HepG2 (cell line): ENCODE measurements at regions of chr6 and their contacts with region 1.

Region 1: GRCh38 chr6:11224252-11224965 is 8.1 kb downstream of the NEDD9 start:
- DNase-seq: no peak
- ATAC-seq: no peak
- H3K4me3 ChIP-seq: peak overlapping the region; percentile 6 to 49 (median 25); a peak in 5 of 6 replicates
- H3K27ac ChIP-seq: peak overlapping the region; percentile 31
- H3K4me1 ChIP-seq: peaks cover 91% of the 10 kb centered on the region
- H3K27me3 ChIP-seq: no peaks in the 10 kb centered on the region; a peak in 1 of 5 replicates
- CTCF ChIP-seq: no peak
- EP300 ChIP-seq: no peak
- POLR2A ChIP-seq: peak; percentile 7 to 37; a peak in 3 of 4 replicates
- RAD21 ChIP-seq: no peak

Region 2: DNA sequence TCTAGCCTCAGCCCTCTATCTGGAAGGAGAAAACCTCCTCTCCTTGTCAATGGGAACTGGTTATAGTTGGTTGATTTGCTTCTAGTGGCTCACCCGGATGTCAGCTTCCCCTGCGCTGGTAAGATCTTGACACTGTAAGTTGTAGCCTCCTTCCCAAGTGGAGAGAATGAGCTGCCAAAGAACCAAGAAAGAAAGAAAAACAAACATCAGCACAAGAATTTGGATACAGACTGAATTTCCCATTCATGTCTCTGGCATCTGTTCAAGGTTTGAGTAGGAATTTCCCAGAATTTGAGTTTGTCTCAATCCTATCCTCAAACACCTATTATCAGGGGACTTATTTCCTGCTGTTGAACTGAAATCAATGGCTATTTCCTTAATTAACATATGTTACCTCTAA is 224.4 kb before region 1 on chr6:
- CTCF ChIA-PET with region 1: no interaction called
- POLR2A ChIA-PET with region 1: no interaction called
- in situ Hi-C with region 1: no loop called
- intact Hi-C with region 1: no loop called
- DNase-seq: no peak
- ATAC-seq: no peak
- H3K4me3 ChIP-seq: no peak overlapping the region
- H3K27ac ChIP-seq: no peak overlapping the region
- H3K4me1 ChIP-seq: peaks cover 26% of the 10 kb centered on the region
- H3K27me3 ChIP-seq: no peaks in the 10 kb centered on the region
- CTCF ChIP-seq: no peak
- EP300 ChIP-seq: no peak
- POLR2A ChIP-seq: no peak
- RAD21 ChIP-seq: no peak

Region 3: DNA sequence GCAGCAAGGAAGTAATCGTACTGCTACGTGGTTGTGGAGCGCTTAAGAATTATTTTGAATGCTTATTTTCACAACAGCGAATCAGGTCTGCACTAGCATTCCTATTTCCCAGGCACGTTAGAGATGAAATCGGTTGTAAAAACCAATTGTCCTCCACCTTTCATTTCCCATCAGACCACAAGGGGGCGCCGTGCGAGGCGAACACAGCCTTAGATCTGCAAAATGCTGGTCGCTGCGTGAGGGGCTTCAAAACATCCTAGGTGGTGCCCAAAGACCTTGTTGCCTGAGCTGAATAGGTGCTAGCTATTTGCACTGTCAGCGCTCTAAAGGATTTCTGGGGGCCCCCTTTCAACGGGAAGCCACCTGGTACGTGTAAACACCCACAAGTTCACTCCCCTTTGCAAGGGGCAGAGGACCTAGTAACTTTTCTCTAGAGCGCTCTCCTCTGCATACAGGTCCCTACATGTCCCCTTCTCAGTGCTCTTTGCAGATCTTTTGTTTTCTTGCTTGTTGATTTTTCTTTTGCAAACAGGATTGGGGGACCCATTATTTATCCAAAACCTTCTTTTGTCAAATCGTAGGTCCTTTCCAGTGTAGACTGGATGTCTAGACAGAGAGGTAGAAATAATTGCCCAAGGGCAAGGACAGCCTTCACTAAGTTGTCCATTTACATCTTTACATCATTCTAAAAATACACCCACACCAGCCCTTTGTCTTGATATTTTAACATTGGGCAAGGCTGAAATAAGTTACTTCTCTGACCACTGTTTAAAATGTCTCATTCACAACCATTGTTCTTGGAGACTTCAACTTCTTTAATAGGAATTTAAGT is 51.7 kb before region 1 on chr6:
- CTCF ChIA-PET with region 1: no interaction called
- POLR2A ChIA-PET with region 1: no interaction called
- in situ Hi-C with region 1: no loop called
- intact Hi-C with region 1: loop called (anchors 2 kb)
- DNase-seq: peak; percentile 66
- ATAC-seq: peak; percentile 86
- H3K4me3 ChIP-seq: peak overlapping the region in 1 of 3 experiments; percentile 47; a peak in 2 of 6 replicates
- H3K27ac ChIP-seq: no peak overlapping the region
- H3K4me1 ChIP-seq: peaks cover 36% of the 10 kb centered on the region
- H3K27me3 ChIP-seq: no peaks in the 10 kb centered on the region
- CTCF ChIP-seq: peak; percentile 96
- EP300 ChIP-seq: no peak
- POLR2A ChIP-seq: no peak
- RAD21 ChIP-seq: peak; percentile 83

Region 4: GRCh38 chr6:11381801-11382513 is 157.5 kb after region 1 on chr6:
- CTCF ChIA-PET with region 1: no interaction called
- POLR2A ChIA-PET with region 1: no interaction called
- in situ Hi-C with region 1: no loop called
- intact Hi-C with region 1: no loop called
- DNase-seq: no peak
- ATAC-seq: no peak
- H3K4me3 ChIP-seq: no peak overlapping the region
- H3K27ac ChIP-seq: no peak overlapping the region
- H3K4me1 ChIP-seq: peaks cover 20% of the 10 kb centered on the region
- H3K27me3 ChIP-seq: no peaks in the 10 kb centered on the region
- CTCF ChIP-seq: no peak
- EP300 ChIP-seq: no peak
- POLR2A ChIP-seq: no peak
- RAD21 ChIP-seq: no peak

Region 5: GRCh38 chr6:11460001-11460668 is 235.7 kb after region 1 on chr6:
- CTCF ChIA-PET with region 1: no interaction called
- POLR2A ChIA-PET with region 1: no interaction called
- in situ Hi-C with region 1: no loop called
- intact Hi-C with region 1: no loop called
- DNase-seq: no peak
- ATAC-seq: no peak
- H3K4me3 ChIP-seq: no peak overlapping the region
- H3K27ac ChIP-seq: no peak overlapping the region
- H3K4me1 ChIP-seq: peaks cover 44% of the 10 kb centered on the region
- H3K27me3 ChIP-seq: no peaks in the 10 kb centered on the region
- CTCF ChIP-seq: peak; percentile 46
- EP300 ChIP-seq: no peak
- POLR2A ChIP-seq: no peak
- RAD21 ChIP-seq: no peak

Region 6: DNA sequence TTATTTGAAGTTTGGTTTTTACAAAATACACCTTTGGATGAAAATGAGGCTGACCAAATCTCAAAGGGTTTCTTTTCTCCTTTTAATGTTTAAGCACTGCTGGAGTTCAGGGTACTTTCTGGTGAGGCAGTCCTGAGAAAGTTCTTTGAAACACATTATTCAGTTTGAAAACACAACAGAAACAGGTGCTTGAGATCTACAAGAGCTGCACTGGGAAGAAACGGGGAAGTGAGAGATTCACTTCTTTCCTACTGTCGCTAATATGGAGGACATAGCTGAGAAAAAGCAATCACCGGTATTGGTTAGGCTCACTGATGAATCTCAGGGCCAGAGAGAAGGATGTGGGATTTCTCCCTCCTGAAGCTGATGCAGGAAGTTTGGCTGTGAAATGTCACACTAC is 290.3 kb after region 1 on chr6:
- CTCF ChIA-PET with region 1: no interaction called
- POLR2A ChIA-PET with region 1: no interaction called
- in situ Hi-C with region 1: no loop called
- intact Hi-C with region 1: no loop called
- DNase-seq: no peak
- ATAC-seq: no peak
- H3K4me3 ChIP-seq: no peak overlapping the region
- H3K27ac ChIP-seq: no peak overlapping the region
- H3K4me1 ChIP-seq: no peaks in the 10 kb centered on the region
- H3K27me3 ChIP-seq: 0 out of 5 replicates have a peak, but pooled peaks cover 0 to 3% of the 10 kb centered on the region in 2 experiments
- CTCF ChIP-seq: no peak
- EP300 ChIP-seq: no peak
- POLR2A ChIP-seq: no peak
- RAD21 ChIP-seq: no peak